Heart left ventricle (tissue), 16 donors: ENCODE measurements at regions of chr16 and their contacts with region 1.

Region 1: GRCh38 chr16:72847187-72848027 is 200.5 kb downstream of the ZFHX3 start:
- DNase-seq: peak in 1 of 5 donors; percentile 36
- ATAC-seq: peak in 3 of 4 donors; percentile 36 to 49 (median 47)
- H3K4me3 ChIP-seq: no peak overlapping the region
- H3K27ac ChIP-seq: peak overlapping the region; percentile 15 to 91 (median 70)
- H3K4me1 ChIP-seq: peaks cover 0 to 78% (median 52%) of the 10 kb centered on the region in 12 donors
- H3K27me3 ChIP-seq: no peaks in the 10 kb centered on the region
- CTCF ChIP-seq: peak in 10 of 12 donors; percentile 13 to 62 (median 42)
- POLR2A ChIP-seq: no peak

Region 2: DNA sequence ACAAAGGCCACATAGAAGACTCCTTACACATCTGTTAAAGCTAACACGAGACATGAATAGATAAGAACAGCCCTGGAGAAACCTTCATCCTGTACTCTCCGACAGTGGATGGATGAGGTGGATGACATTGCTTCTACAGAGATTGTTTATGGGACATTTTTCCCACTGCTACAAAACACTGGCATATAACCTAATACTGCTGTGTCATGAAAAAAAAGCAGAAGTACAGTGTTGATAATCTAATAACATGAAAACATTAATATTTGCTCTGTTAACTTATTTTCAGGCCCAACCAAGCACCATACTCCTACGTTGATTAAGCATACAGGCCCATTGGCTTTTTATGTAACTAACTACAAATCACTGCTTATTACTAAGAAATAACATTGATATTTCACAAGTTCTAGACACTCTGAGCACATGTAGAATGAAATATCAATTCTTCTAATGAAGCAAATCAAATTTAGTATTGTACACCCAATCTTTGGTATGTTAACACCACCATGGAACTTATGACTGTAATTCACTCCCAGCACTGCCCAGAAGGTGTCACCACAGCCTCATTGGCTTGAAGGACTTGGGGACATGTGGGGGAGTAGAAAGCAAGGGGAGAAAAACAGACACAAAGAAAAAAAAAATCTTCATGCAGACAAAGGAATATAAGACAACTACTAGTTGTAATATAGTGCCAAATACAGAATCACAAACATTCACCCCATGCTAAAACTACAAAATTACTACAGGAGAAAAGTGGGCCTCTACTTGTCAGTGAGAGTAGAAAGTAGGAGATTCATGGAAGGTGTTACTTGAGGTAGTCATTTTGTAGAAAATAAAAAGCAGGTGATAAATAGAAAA is 345.4 kb before region 1 on chr16:
- intact Hi-C with region 1: loop called in 1 of 10 experiments (anchors 5 kb)
- DNase-seq: peak in 3 of 5 donors; percentile 29 to 30 (median 29)
- ATAC-seq: peak in 3 of 4 donors; percentile 67 to 80 (median 74)
- H3K4me3 ChIP-seq: no peak overlapping the region
- H3K27ac ChIP-seq: no peak overlapping the region
- H3K4me1 ChIP-seq: no peaks in the 10 kb centered on the region
- H3K27me3 ChIP-seq: no peaks in the 10 kb centered on the region
- CTCF ChIP-seq: peak; percentile 58 to 84 (median 72)
- POLR2A ChIP-seq: no peak

Region 3: DNA sequence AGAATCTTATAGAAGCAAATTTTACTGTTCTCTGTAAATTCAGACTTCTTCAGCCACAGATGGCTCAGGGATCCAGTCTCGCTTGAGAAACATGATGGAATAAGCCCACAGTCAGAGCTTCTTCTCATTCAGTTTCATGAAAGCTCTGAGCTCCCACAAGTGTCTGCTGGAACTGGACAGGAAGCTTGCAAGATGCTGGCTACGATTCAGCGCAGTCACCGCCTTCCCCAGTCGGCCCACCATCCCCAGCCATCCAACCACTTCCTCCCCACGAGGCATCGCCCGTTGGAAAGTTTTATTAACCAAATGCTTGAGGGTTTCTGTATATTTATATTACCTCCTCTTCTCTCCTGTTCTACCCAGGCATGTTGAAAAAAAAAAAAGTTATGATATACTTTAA is 28.8 kb after region 1 on chr16:
- intact Hi-C with region 1: loop called in 1 of 10 experiments (anchors 5 kb)
- DNase-seq: peak; percentile 79 to 83 (median 82)
- ATAC-seq: peak; percentile 61 to 84 (median 80)
- H3K4me3 ChIP-seq: no peak overlapping the region
- H3K27ac ChIP-seq: peak overlapping the region in 8 of 12 donors; percentile 27 to 73 (median 54)
- H3K4me1 ChIP-seq: peaks cover 0 to 61% (median 34%) of the 10 kb centered on the region in 12 donors
- H3K27me3 ChIP-seq: no peaks in the 10 kb centered on the region
- CTCF ChIP-seq: no peak
- POLR2A ChIP-seq: no peak

Region 4: DNA sequence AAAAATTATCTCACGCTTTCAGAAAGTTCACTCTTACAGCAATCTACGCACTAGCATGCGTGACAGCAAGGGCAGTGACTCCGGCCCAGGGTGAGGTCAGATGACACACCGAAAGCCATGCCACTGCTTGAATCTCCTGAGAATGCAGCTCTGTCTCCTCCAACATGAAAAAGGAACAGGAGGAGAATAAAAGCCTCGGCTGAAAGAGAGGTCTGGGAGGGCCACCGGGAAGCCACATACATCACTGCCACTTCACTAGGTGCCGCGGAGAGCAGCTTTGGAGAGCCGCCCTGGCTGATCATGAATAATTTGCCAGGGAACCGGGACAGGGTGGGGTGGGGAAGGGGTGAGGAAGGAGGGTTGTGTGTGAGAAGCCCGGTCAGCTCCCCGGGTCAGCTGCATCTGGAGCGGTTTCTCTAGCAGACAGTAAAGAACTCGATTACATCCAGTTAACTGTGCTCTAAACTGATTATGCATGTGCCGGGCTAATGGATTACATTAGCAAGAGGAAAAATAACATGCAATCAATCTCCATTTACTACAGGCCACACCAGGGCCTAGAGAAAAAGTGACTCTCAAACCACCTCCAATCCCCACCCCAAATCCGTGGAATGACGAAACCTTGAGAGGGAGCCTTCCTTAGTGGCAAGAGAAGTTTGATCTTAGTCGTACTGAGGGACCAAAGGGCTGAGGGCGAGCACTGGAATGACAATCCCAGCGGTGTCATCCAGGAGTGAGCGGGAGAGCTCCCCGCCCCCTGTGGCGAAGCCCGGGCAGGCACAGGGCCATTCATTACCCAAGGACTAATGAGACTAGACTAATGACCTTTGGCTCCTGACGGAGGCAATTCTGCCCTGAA is 100.2 kb after region 1 on chr16:
- intact Hi-C with region 1: loop called in 1 of 10 experiments (anchors 5 kb)
- DNase-seq: peak in 1 of 5 donors; percentile 47
- ATAC-seq: peak in 2 of 4 donors; percentile 30 to 40
- H3K4me3 ChIP-seq: no peak overlapping the region
- H3K27ac ChIP-seq: peak overlapping the region in 10 of 12 donors; percentile 32 to 75 (median 55)
- H3K4me1 ChIP-seq: peaks cover 2 to 34% (median 22%) of the 10 kb centered on the region in 12 donors
- H3K27me3 ChIP-seq: no peaks in the 10 kb centered on the region
- CTCF ChIP-seq: no peak
- POLR2A ChIP-seq: no peak

Region 5: DNA sequence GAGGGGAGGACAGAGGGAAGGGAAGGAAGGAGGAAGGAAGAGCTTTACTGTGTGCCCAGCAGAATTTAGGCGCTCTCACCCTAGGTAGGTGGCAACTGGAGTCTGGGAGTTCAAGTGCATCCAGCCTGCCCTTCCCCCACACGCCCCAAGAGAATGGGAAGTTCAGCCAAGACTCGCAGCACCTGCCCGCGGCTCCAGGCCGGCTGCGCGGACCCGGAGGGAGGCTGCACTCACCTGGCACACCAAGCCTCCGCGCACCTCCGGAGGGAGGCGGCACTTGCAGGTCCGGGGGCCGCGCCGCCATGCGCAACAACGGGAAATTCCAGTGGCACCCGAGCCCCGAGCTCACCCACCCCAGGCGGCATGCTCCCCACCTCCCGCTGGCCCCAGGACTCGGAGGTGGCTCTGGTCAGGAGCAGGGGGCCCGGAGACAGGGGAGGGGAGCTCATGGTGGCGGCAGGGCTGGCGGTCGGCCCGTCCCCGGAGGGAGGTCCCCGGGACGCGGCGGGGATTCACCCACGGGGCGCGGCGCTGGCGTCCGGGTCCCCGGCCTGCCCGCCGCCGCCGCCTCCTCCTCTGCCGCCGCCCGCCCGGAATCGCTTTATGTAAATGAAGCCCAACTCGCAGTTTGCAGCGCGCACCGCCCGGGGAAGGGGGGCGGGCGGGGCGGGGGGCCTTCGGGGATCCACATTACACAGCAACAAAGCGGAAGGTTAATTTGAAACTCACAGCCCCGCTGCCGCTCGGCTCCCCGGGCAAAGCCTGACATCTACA is 200.3 kb after region 1 on chr16 and contains the start of gene ZFHX3:
- intact Hi-C with region 1: loop called in 3 of 10 experiments (anchors 5 kb)
- DNase-seq: peak; percentile 72 to 85 (median 82)
- ATAC-seq: peak; percentile 33 to 79 (median 73)
- H3K4me3 ChIP-seq: peak within 1 kb of the TSS; percentile 64 to 98 (median 82)
- H3K27ac ChIP-seq: peak within 1 kb of the TSS; percentile 87 to 97 (median 91)
- H3K4me1 ChIP-seq: peaks cover 6 to 89% (median 58%) of the 10 kb centered on the region in 12 donors
- H3K27me3 ChIP-seq: no peaks in the 10 kb centered on the region
- CTCF ChIP-seq: peak in 6 of 12 donors; percentile 9 to 48 (median 34)
- POLR2A ChIP-seq: peak in 1 of 2 donors; percentile 26
- total RNA-seq, gene ZFHX3: 7.8 to 21.6 (median 14.5) TPM

Region 6: GRCh38 chr16:73068541-73069401 is 221.4 kb after region 1 on chr16:
- intact Hi-C with region 1: loop called in 1 of 10 experiments (anchors 5 kb)
- DNase-seq: peak; percentile 78 to 90 (median 82)
- ATAC-seq: peak; percentile 74 to 88 (median 82)
- H3K4me3 ChIP-seq: peak overlapping the region in 3 of 12 donors; percentile 4 to 17 (median 6)
- H3K27ac ChIP-seq: peak overlapping the region; percentile 75 to 96 (median 89)
- H3K4me1 ChIP-seq: peaks cover 3 to 74% (median 60%) of the 10 kb centered on the region in 12 donors
- H3K27me3 ChIP-seq: peaks cover 0 to 30% (median 6%) of the 10 kb centered on the region in 9 donors
- CTCF ChIP-seq: no peak
- POLR2A ChIP-seq: no peak